Aorta (tissue), 5 donors: ENCODE measurements at regions of chr2 and their contacts with region 1.

Region 1: DNA sequence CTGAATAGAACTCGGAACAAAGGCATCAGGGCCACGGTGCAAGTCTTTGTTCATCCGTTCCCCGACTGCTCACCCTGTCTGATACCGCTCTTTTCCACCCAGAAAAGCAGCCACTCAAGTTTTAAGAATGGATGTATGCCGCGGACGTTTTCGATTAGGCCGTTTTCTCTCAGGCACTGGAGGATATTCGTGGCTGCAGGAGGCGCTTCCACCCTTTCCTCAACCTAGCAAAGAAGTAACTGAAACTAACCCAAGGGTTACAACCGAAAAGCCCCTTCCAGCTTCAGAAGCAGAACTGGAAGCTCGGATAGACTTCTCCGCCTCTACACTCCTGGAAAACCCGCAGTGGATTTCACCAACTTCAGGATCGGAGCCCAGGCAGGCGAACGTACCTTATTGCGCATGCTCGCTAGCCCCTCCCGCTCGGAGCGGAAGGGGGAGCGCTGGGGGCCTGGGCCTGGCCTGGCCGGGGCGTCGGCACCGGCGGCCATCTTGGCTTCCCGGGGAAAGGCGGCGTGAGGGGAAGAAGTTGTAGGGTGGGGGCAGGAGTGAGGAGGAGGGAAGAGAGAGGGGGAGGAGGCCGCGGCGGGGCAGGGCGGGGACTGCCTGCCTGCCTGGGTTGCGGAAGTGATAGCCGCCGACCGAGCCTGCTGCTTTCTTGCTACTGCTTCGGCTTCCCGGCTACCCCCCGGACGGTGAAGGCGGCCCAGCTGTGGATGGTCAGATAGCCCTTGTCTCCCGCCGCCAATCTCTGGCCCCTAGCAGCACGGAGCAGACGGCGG is at the start of gene ACTR3:
- DNase-seq: peak; percentile 99
- ATAC-seq: peak; percentile 99
- H3K4me3 ChIP-seq: peak within 1 kb of the TSS; percentile 90 to 98
- H3K27ac ChIP-seq: peak within 1 kb of the TSS; percentile 96 to 97
- H3K4me1 ChIP-seq: peaks cover 1 to 4% of the 10 kb centered on the region in 2 donors
- H3K27me3 ChIP-seq: no peaks in the 10 kb centered on the region
- total RNA-seq, gene ACTR3: 222 to 318 TPM

Region 2: GRCh38 chr2:113756355-113757137 is 133.1 kb before region 1 on chr2 and contains the start of gene SLC35F5:
- intact Hi-C with region 1: loop called (anchors 2 to 5 kb)
- DNase-seq: peak; percentile 95 to 97
- ATAC-seq: peak; percentile 100
- H3K4me3 ChIP-seq: peak within 1 kb of the TSS; percentile 59 to 79
- H3K27ac ChIP-seq: peak within 1 kb of the TSS; percentile 68 to 86
- H3K4me1 ChIP-seq: no peaks in the 10 kb centered on the region
- H3K27me3 ChIP-seq: no peaks in the 10 kb centered on the region
- total RNA-seq, gene SLC35F5: 73.5 to 82.4 TPM

Region 3: GRCh38 chr2:113940891-113941290 is 51.2 kb after region 1 on chr2:
- intact Hi-C with region 1: loop called in 1 of 2 experiments (anchors 10 kb)
- DNase-seq: no peak
- ATAC-seq: no peak
- H3K4me3 ChIP-seq: no peak overlapping the region
- H3K27ac ChIP-seq: no peak overlapping the region
- H3K4me1 ChIP-seq: no peaks in the 10 kb centered on the region
- H3K27me3 ChIP-seq: no peaks in the 10 kb centered on the region

Region 4: DNA sequence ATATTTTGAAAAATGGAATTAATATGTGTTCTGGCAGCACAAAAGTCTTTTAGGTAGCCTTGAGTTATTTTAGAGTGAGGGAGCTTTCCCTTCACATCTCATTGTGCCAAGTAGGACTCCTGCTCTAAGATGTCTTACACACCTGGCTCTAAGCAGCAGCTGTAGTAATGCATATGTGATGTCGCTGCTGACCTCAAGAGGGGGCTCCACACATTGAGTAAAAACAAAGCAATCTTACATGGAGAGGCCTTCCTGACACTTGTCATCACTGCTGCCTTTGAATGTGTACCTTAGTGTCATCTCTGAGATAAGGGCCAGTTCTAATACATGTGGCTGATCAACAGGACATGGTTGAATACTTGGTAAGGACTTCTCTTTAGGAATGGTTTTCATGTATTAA is 76.0 kb after region 1 on chr2:
- intact Hi-C with region 1: no loop called
- DNase-seq: no peak
- ATAC-seq: no peak
- H3K4me3 ChIP-seq: no peak overlapping the region
- H3K27ac ChIP-seq: no peak overlapping the region
- H3K4me1 ChIP-seq: peaks cover 0 to 10% of the 10 kb centered on the region in 2 donors
- H3K27me3 ChIP-seq: no peaks in the 10 kb centered on the region

Region 5: GRCh38 chr2:114421781-114422180 is 532.1 kb after region 1 on chr2:
- intact Hi-C with region 1: loop called in 1 of 2 experiments (anchors 10 kb)
- DNase-seq: no peak
- ATAC-seq: no peak
- H3K4me3 ChIP-seq: no peak overlapping the region
- H3K27ac ChIP-seq: no peak overlapping the region
- H3K4me1 ChIP-seq: peaks cover 0 to 8% of the 10 kb centered on the region in 2 donors
- H3K27me3 ChIP-seq: no peaks in the 10 kb centered on the region

Region 6: GRCh38 chr2:114543236-114543766 is 653.6 kb after region 1 on chr2:
- intact Hi-C with region 1: loop called in 1 of 2 experiments (anchors 10 kb)
- DNase-seq: peak in 1 of 2 donors; percentile 61
- ATAC-seq: peak; percentile 87
- H3K4me3 ChIP-seq: peak overlapping the region in 1 of 2 donors; percentile 11
- H3K27ac ChIP-seq: peak overlapping the region; percentile 67 to 77
- H3K4me1 ChIP-seq: no peaks in the 10 kb centered on the region
- H3K27me3 ChIP-seq: no peaks in the 10 kb centered on the region